Calu3 (cell line): ENCODE measurements at regions of chr17 and their contacts with region 1.

Region 1: DNA sequence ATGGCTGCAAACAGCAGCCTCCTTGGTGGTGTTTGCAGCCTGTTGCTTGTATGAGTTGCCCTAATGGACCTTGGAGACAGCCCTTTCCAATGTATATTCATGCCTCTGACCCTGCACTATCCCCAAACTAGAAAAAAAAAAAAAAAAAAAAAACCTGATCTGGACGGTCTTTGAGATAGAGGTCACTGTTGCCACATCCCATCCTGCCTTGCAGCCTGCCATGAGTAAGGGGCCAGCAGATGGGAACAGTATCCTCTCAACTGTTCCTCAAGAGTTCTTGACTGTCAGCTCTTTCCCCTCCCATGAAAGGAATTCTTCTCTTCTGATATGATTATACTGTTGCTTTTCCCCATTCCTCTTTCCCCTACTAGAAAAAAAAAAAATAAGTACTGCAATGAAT is 152.4 kb downstream of the SSH2 start:
- DNase-seq: no peak
- H3K4me3 Mint-ChIP-seq: no peak overlapping the region
- H3K27ac Mint-ChIP-seq: no peak overlapping the region
- H3K4me1 Mint-ChIP-seq: no peaks in the 10 kb centered on the region
- H3K27me3 Mint-ChIP-seq: no peaks in the 10 kb centered on the region
- CTCF ChIP-seq: no peak

Region 2: DNA sequence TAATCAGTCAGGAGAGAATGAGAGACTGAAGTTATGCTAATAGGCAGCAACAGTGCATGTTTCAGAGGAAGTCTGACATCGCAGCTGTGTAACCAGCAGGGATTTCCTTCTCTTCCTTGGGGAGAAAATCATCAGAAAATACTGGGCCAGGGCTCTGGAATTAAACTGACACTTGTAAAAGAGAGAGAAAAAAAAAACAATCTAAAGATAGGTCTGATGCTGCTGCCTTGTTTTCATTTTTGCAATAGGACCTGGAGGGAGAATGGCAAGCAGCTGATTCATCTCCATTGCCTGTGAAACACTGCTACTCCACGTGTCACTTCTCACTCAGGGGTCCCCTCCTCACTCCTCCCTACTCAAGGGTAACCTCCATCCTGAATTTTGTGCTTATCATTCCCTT is 137.2 kb before region 1 on chr17:
- CTCF ChIA-PET with region 1: interaction called, 69 read pairs
- intact Hi-C with region 1: loop called (anchors 1 kb)
- DNase-seq: no peak
- H3K4me3 Mint-ChIP-seq: no peak overlapping the region
- H3K27ac Mint-ChIP-seq: no peak overlapping the region
- H3K4me1 Mint-ChIP-seq: peaks cover 18% of the 10 kb centered on the region
- H3K27me3 Mint-ChIP-seq: no peaks in the 10 kb centered on the region
- CTCF ChIP-seq: no peak

Region 3: GRCh38 chr17:29740017-29740416 is 37.6 kb before region 1 on chr17:
- CTCF ChIA-PET with region 1: no interaction called
- intact Hi-C with region 1: loop called (anchors 5 kb)
- DNase-seq: no peak
- H3K4me3 Mint-ChIP-seq: no peak overlapping the region
- H3K27ac Mint-ChIP-seq: no peak overlapping the region
- H3K4me1 Mint-ChIP-seq: peaks cover 10% of the 10 kb centered on the region
- H3K27me3 Mint-ChIP-seq: no peaks in the 10 kb centered on the region
- CTCF ChIP-seq: no peak

Region 4: DNA sequence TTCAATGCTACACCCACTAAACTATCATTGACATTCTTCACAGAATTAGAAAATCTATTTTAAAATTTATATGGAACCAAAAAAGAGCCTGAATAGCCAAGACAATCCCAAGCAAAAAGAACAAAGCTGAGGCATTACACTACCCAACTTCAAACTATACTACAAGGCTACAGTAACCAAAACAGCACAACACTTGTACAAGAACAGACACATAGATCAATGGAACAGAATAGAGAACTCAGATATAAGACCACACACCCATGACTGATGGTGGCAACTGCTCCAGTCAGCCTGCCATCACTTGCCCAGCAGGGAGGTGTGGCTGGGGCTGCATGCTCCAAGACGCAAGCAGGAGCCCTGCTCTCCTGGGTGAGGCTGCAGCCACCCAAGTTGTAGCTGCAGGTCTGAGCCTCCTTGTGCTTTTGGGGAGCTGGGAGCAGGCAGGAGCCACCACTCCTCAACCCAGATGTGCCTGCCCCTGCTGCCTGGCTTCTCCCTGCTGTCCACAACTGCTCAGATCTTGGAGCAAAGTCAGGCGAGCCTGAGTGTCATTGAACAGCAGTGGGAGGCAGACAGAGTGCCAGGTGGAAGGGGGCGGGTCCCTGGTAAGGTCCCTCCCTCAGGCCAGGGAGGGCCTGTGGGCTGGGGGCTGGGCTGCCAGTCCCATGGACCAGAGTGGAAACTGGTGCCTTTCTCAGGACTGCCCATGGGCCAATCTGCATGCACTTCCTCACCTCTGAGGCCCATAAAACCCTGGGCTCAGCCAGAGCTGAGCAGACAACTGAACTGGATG is 127.6 kb after region 1 on chr17:
- CTCF ChIA-PET with region 1: no interaction called
- intact Hi-C with region 1: no loop called
- DNase-seq: no peak
- H3K4me3 Mint-ChIP-seq: no peak overlapping the region
- H3K27ac Mint-ChIP-seq: no peak overlapping the region
- H3K4me1 Mint-ChIP-seq: no peaks in the 10 kb centered on the region
- H3K27me3 Mint-ChIP-seq: no peaks in the 10 kb centered on the region
- CTCF ChIP-seq: no peak

Region 5: GRCh38 chr17:30309591-30309990 is 531.9 kb after region 1 on chr17:
- CTCF ChIA-PET with region 1: no interaction called
- intact Hi-C with region 1: no loop called
- DNase-seq: no peak
- H3K4me3 Mint-ChIP-seq: no peak overlapping the region
- H3K27ac Mint-ChIP-seq: no peak overlapping the region
- H3K4me1 Mint-ChIP-seq: no peaks in the 10 kb centered on the region
- H3K27me3 Mint-ChIP-seq: no peaks in the 10 kb centered on the region
- CTCF ChIP-seq: no peak